ENCODE measurements at regions of chr6 and their contacts with region 1.

Region 1: DNA sequence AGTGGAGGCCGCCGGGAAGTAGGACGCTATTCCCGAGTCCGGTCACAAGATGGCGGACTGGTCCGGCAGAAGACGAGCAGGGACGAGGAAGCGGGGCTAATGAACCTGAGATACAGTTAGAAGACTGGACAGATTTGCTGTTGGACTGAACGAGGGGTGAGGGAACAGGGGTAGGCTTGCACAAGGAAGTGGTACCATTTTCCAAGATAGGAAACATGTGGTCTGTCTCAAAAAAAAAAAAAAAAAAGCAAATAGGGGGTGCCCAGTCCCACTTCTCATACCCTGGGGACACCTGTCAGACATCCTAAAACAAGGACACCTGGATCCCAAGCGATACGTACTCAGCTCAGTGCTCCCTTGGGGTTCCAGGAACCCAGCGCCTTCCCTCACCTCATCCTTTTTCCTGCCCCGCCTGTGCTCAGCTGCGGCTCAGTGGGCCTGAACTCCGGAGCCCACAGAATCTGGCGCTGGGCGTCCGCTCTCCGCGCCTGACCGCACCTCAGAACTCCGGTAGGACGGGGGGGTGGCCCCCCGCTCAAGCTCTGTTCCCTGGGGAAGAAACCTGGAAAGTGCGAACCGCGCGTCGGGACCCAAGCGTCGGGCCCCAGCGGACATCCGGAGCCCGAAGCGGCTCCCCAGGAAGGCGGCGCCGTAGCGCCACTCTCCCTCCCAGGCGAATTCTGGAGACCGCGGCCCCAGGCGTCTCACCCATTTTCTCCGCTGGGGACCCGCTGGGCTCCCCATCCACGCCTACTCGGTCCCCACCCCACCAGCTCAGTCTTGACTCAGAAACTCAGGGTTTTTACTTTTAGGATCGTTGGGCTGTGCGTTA is at the start of gene LY6G5C:
- DNase-seq: peak; percentile 81
- H3K4me3 ChIP-seq: peak within 1 kb of the TSS; percentile 18 to 59 (median 47)
- H3K27ac ChIP-seq: peak within 1 kb of the TSS; percentile 18
- H3K4me1 ChIP-seq: peaks cover 8% of the 10 kb centered on the region
- H3K27me3 ChIP-seq: no peaks in the 10 kb centered on the region
- CTCF ChIP-seq: peak; percentile 60 to 66
- POLR2A ChIP-seq: peak; percentile 68
- total RNA-seq, gene LY6G5C: 5.2 and 8.2 TPM in 2 replicates

Region 2: DNA sequence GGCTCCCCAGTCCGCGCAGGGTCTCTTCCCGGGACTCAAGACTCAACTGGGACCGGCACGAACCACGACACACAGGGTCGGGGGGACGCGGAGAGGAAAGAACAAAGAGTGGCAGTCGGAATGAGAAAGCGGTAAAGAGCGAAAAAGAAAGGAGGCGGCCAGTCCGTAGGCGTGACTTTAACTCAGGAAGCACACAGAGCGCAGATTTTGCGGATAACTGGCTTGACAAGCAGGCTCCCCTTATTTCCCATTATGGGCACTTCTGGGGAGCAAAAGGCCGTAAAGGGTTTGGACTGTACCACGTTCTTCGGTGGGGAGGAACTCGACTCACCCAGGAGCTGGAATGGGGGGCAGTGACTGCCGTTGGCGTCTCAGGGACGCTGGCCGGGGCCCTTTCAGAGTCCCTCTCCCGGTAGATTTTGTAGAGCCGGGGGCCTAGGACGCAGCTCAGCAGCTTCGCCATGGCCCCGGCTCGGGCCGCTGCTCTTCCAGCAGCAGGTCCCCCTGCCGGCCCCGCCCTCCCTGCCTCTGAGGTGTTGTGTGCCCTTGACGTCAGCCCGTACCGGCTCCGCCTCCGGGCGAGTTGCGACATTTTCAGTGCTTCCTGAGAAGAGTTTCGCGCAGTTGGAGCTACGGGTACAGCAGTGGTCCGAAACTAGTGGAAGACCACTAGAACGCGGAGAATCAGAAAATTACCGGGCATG is 21.9 kb after region 1 on chr6 and contains the start of gene ABHD16A:
- CTCF ChIA-PET with region 1: interaction called, 6 read pairs
- POLR2A ChIA-PET with region 1: interaction called, 9 read pairs
- dilution Hi-C with region 1: no loop called
- intact Hi-C with region 1: loop called (anchors 1 kb)
- DNase-seq: peak; percentile 99
- H3K4me3 ChIP-seq: peak within 1 kb of the TSS; percentile 59 to 80 (median 74)
- H3K27ac ChIP-seq: peak within 1 kb of the TSS; percentile 77
- H3K4me1 ChIP-seq: peaks cover 11% of the 10 kb centered on the region
- H3K27me3 ChIP-seq: no peaks in the 10 kb centered on the region
- CTCF ChIP-seq: peak in 1 of 2 donors; percentile 3
- POLR2A ChIP-seq: peak; percentile 97
- total RNA-seq, gene ABHD16A: 41.3 and 48.9 TPM in 2 replicates

Region 3: GRCh38 chr6:31769684-31770371 is 88.8 kb after region 1 on chr6:
- CTCF ChIA-PET with region 1: interaction called, 19 read pairs
- POLR2A ChIA-PET with region 1: no interaction called
- dilution Hi-C with region 1: no loop called
- intact Hi-C with region 1: loop called (anchors 1 kb)
- DNase-seq: peak; percentile 66
- H3K4me3 ChIP-seq: no peak overlapping the region
- H3K27ac ChIP-seq: no peak overlapping the region
- H3K4me1 ChIP-seq: no peaks in the 10 kb centered on the region
- H3K27me3 ChIP-seq: no peaks in the 10 kb centered on the region
- CTCF ChIP-seq: peak; percentile 83 to 88
- POLR2A ChIP-seq: no peak

Region 4: GRCh38 chr6:31785475-31785874 is 104.4 kb after region 1 on chr6:
- CTCF ChIA-PET with region 1: no interaction called
- POLR2A ChIA-PET with region 1: no interaction called
- dilution Hi-C with region 1: no loop called
- intact Hi-C with region 1: no loop called
- DNase-seq: no peak
- H3K4me3 ChIP-seq: no peak overlapping the region
- H3K27ac ChIP-seq: no peak overlapping the region
- H3K4me1 ChIP-seq: no peaks in the 10 kb centered on the region
- H3K27me3 ChIP-seq: no peaks in the 10 kb centered on the region
- CTCF ChIP-seq: no peak
- POLR2A ChIP-seq: no peak

Region 5: DNA sequence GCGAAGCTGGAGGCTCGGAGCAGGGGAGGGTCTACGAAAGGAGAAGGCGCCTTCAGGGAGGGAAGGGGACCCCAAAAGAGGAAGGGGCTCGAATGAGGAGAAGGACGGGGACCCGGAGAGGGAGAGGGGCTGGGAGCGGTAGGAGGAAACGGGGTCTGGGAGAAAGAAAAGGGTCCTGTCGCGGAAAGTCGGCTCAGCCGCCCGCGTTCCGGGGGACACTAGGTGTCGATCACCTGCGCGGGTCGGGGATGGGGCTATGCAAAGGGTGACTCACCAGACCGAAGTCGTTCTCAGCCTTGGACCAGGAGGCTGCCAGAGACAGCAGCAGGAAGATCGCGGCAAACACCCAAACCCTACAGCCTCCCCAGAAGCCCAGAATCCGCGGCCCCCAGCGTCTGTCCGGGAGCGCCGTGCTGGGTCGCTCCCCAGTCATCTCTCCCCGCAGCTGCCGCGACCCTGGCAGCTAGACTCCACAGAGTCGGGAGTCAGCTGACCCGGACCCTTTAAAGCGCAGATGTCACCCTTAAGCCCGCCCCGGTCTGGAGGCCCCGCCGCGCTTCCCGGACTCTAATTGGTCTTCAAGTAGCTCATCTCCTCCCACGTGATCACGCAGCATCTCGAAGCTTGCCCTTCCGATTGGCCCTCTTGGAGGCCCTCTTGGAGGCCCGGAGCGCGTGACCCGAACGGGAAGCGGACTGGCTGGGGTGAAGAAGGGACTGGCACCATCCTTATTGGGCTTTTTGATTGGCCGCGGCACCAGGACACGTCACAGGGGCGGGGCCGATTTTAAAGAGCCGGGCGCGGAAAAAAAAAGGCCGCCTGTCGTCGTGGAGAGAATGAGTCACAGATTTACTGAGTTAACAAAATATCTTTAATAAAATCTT is 181.5 kb after region 1 on chr6 and contains the start of gene NEU1:
- CTCF ChIA-PET with region 1: interaction called, 5 read pairs
- POLR2A ChIA-PET with region 1: no interaction called
- dilution Hi-C with region 1: no loop called
- intact Hi-C with region 1: loop called (anchors 1 kb)
- DNase-seq: peak; percentile 100
- H3K4me3 ChIP-seq: peak within 1 kb of the TSS; percentile 71 to 88 (median 83)
- H3K27ac ChIP-seq: peak within 1 kb of the TSS; percentile 77
- H3K4me1 ChIP-seq: peaks cover 7% of the 10 kb centered on the region
- H3K27me3 ChIP-seq: no peaks in the 10 kb centered on the region
- CTCF ChIP-seq: no peak
- POLR2A ChIP-seq: peak; percentile 99
- total RNA-seq, gene NEU1: 61.3 and 62.8 TPM in 2 replicates

Region 6: GRCh38 chr6:31952140-31952805 is 271.2 kb after region 1 on chr6:
- CTCF ChIA-PET with region 1: interaction called, 9 read pairs
- POLR2A ChIA-PET with region 1: no interaction called
- dilution Hi-C with region 1: no loop called
- intact Hi-C with region 1: loop called (anchors 1 kb)
- DNase-seq: peak; percentile 57
- H3K4me3 ChIP-seq: no peak overlapping the region
- H3K27ac ChIP-seq: no peak overlapping the region
- H3K4me1 ChIP-seq: no peaks in the 10 kb centered on the region
- H3K27me3 ChIP-seq: no peaks in the 10 kb centered on the region
- CTCF ChIP-seq: peak; percentile 82 to 83
- POLR2A ChIP-seq: no peak